Uterus (tissue), 4 donors: ENCODE measurements at regions of chr1 and their contacts with region 1.

Region 1: DNA sequence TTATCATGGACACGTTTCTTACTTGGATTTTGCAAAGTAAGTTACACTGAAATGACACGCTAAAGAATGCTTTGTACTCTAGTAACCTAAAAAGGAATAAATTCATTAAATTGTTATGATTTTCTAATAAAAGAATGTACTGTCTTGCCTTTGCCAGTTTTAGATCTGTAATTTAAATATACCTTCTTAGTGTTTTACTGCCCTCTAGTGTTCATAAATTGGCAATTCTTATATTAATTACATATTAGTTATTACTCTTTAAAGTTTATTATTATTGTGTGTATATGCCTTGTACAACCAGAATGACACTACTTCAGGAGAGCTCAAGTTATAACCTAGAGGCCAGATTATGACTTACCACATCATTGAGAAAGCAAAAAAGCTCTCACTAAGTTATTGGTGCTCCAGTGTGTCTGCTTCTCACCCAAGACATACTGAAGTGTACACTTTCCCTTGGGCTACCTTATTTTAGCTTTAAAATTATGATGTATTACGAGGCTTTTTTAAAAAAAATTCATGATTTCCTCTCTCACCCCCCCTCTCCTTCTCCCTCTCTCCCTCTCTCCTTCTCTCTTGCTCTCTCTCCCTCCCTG is 169.9 kb downstream of the HS2ST1 start:
- DNase-seq: no peak
- H3K4me3 ChIP-seq: no peak overlapping the region
- H3K27ac ChIP-seq: no peak overlapping the region
- H3K4me1 ChIP-seq: no peaks in the 10 kb centered on the region
- H3K27me3 ChIP-seq: no peaks in the 10 kb centered on the region
- CTCF ChIP-seq: peak; percentile 36 to 70 (median 54)
- POLR2A ChIP-seq: no peak

Region 2: DNA sequence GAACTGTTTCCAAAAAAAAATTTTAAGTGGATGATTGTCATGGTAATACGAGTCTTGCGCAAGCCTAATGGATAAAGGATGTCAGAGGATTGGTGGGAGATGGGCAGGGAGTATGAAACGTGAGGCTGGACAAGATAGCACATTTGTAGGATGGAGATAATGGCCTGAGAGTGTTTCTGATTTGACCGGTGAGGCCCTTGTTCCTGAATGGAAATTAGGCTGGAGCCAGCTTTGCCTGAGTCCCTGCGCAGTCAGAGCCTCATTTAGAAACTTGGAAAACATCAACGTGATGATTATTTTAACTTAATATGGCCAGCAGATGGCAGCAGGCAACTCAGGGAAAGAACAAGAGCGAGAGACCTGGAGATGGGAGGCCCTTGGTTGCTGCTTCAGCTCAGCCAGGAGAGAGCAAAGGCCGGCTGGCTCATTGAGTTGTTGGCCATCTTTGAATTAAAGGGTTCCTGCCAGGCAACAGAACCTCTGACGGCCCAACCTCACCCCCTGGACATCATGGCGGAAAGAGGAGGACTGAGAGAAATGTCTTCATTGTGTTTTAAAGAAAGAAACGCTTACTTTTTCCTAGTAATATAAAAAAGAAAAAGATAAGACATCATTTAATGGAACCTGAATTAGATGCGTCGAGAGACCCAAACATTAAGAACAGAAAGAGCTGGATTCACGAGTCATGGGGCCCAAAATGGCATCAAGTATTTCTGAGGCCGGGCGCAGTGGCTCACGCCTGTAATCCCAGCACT is 250.7 kb before region 1 on chr1:
- intact Hi-C with region 1: loop called (anchors 10 kb)
- DNase-seq: peak; percentile 66 to 78
- H3K4me3 ChIP-seq: no peak overlapping the region
- H3K27ac ChIP-seq: no peak overlapping the region
- H3K4me1 ChIP-seq: no peaks in the 10 kb centered on the region
- H3K27me3 ChIP-seq: no peaks in the 10 kb centered on the region
- CTCF ChIP-seq: peak; percentile 64 to 71 (median 64)
- POLR2A ChIP-seq: no peak

Region 3: GRCh38 chr1:87279966-87280535 is 195.7 kb after region 1 on chr1:
- intact Hi-C with region 1: no loop called
- DNase-seq: no peak
- H3K4me3 ChIP-seq: no peak overlapping the region
- H3K27ac ChIP-seq: peak overlapping the region; percentile 1 to 5
- H3K4me1 ChIP-seq: no peaks in the 10 kb centered on the region
- H3K27me3 ChIP-seq: no peaks in the 10 kb centered on the region
- CTCF ChIP-seq: no peak
- POLR2A ChIP-seq: no peak